ENCODE measurements at regions of chr12 and their contacts with region 1.

Region 1: GRCh38 chr12:724194-724855 is 28.1 kb upstream of the WNK1 start:
- DNase-seq: no peak
- ATAC-seq: peak; percentile 66
- H3K4me3 ChIP-seq: no peak overlapping the region
- H3K27ac ChIP-seq: peak overlapping the region; percentile 46; the same call in 1 of the 2 replicates
- H3K4me1 ChIP-seq: peaks cover 36% of the 10 kb centered on the region
- H3K27me3 ChIP-seq: no peaks in the 10 kb centered on the region
- CTCF ChIP-seq: no peak
- EP300 ChIP-seq: no peak
- POLR2A ChIP-seq: no peak
- RAD21 ChIP-seq: no peak

Region 2: GRCh38 chr12:614411-614970 is 109.8 kb before region 1 on chr12:
- CTCF ChIA-PET with region 1: interaction called, 13 read pairs
- POLR2A ChIA-PET with region 1: interaction called, 5 read pairs
- RAD21 ChIA-PET with region 1: no interaction called
- SMC1A ChIA-PET with region 1: interaction called, 4 read pairs
- in situ Hi-C with region 1: no loop called
- intact Hi-C with region 1: no loop called
- DNase-seq: no peak
- ATAC-seq: peak; percentile 78
- H3K4me3 ChIP-seq: no peak overlapping the region
- H3K27ac ChIP-seq: no peak overlapping the region
- H3K4me1 ChIP-seq: peaks cover 10% of the 10 kb centered on the region
- H3K27me3 ChIP-seq: no peaks in the 10 kb centered on the region
- CTCF ChIP-seq: peak; percentile 61 to 86 (median 63)
- EP300 ChIP-seq: no peak
- POLR2A ChIP-seq: no peak
- RAD21 ChIP-seq: peak; percentile 75

Region 3: DNA sequence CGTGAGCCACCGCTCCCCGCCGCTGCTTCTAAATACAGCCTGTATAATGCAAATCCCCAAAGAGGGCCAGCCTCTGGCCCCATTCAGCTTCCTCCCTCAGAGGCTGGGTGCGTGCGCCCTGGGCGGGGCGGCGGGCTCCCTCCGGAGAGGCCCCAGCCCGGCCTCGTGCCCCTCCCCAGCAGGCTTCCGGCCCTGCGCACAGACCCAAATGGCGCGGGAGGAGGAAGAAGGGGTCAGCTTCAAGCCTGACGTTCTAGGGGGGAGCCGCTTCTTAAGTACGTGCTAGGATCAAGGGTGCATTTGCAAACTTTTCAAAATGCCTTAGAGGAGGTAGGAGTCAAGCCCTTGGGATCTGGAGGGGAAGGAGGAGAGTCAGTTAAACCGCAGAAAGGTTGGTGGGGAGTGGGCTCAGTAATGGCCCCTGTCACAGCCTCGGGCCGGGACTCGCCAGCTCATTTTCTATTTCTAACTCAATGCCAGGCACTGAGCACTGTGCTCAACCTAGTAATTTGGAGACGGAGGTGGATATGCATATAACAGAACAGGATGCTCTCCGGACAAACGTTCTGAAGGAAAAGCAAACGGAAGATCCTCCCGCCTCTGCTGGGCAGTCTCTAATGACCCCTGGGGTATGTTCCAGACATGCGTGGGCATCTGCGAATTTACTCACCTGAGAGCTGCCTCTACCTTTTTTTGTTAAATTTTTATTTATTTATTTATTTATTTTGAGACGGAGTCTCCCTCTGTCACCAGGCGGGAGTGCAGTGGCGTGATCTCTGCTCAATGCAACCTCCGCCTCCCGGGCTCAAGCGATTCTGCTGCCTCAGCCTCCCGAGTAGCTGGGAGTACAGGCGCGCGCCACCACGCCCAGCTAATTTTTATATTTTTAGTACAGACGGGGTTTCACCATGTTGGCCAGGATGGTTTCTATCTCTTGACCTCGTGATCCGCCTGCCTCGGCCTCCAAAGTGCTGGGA is 93.4 kb before region 1 on chr12:
- CTCF ChIA-PET with region 1: no interaction called
- POLR2A ChIA-PET with region 1: interaction called, 10 read pairs
- RAD21 ChIA-PET with region 1: no interaction called
- SMC1A ChIA-PET with region 1: interaction called, 5 read pairs
- in situ Hi-C with region 1: no loop called
- intact Hi-C with region 1: no loop called
- DNase-seq: no peak
- ATAC-seq: peak; percentile 98
- H3K4me3 ChIP-seq: peak overlapping the region; percentile 60
- H3K27ac ChIP-seq: peak overlapping the region; percentile 92
- H3K4me1 ChIP-seq: peaks cover 16% of the 10 kb centered on the region
- H3K27me3 ChIP-seq: no peaks in the 10 kb centered on the region
- CTCF ChIP-seq: no peak
- EP300 ChIP-seq: no peak
- POLR2A ChIP-seq: peak; percentile 86
- RAD21 ChIP-seq: no peak

Region 4: GRCh38 chr12:668090-668481 is 56.2 kb before region 1 on chr12:
- CTCF ChIA-PET with region 1: interaction called, 6 read pairs
- POLR2A ChIA-PET with region 1: interaction called, 20 read pairs
- RAD21 ChIA-PET with region 1: interaction called, 22 read pairs
- SMC1A ChIA-PET with region 1: interaction called, 28 read pairs
- in situ Hi-C with region 1: no loop called
- intact Hi-C with region 1: no loop called
- DNase-seq: no peak
- ATAC-seq: peak; percentile 27
- H3K4me3 ChIP-seq: no peak overlapping the region
- H3K27ac ChIP-seq: peak overlapping the region; percentile 87
- H3K4me1 ChIP-seq: peaks cover 76% of the 10 kb centered on the region
- H3K27me3 ChIP-seq: no peaks in the 10 kb centered on the region
- CTCF ChIP-seq: no peak
- EP300 ChIP-seq: no peak
- POLR2A ChIP-seq: no peak
- RAD21 ChIP-seq: no peak

Region 5: DNA sequence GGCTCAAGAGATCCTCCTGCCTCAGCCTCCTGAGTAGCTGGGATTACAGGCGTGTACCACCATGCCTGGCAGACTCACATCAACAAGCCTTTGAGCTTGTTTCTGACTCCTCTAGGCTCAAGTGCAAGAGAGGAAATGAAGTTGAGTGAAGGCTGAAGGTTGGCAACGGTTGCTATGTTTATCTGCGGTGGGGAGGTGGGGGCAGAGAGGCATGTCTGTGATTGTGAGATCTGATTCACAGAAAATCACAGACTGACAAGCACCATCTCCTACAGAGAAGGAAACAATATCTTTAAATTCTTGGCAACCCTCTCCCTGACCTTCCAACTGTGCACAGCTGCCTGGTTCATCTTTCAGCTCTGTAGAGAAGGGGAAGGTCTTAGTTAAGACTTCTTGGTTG is 38.9 kb before region 1 on chr12:
- CTCF ChIA-PET with region 1: interaction called, 3 read pairs
- POLR2A ChIA-PET with region 1: interaction called, 14 read pairs
- RAD21 ChIA-PET with region 1: interaction called, 17 read pairs
- SMC1A ChIA-PET with region 1: interaction called, 39 read pairs
- in situ Hi-C with region 1: no loop called
- intact Hi-C with region 1: no loop called
- DNase-seq: peak; percentile 88
- ATAC-seq: peak; percentile 84
- H3K4me3 ChIP-seq: peak overlapping the region; percentile 37; the same call in 1 of the 2 replicates
- H3K27ac ChIP-seq: peak overlapping the region; percentile 73
- H3K4me1 ChIP-seq: peaks cover 39% of the 10 kb centered on the region
- H3K27me3 ChIP-seq: no peaks in the 10 kb centered on the region
- CTCF ChIP-seq: no peak
- EP300 ChIP-seq: peak; percentile 44 to 64; a peak in 2 of 4 replicates
- POLR2A ChIP-seq: 0 out of 2 replicates have a peak, but pooled peaks have one; percentile 40
- RAD21 ChIP-seq: no peak

Region 6: GRCh38 chr12:737122-737739 is 12.9 kb after region 1 on chr12:
- CTCF ChIA-PET with region 1: interaction called, 13 read pairs
- POLR2A ChIA-PET with region 1: interaction called, 21 read pairs
- RAD21 ChIA-PET with region 1: interaction called, 10 read pairs
- SMC1A ChIA-PET with region 1: interaction called, 133 read pairs
- in situ Hi-C with region 1: no loop called
- intact Hi-C with region 1: loop called (anchors 2 kb)
- DNase-seq: no peak
- ATAC-seq: no peak
- H3K4me3 ChIP-seq: no peak overlapping the region
- H3K27ac ChIP-seq: no peak overlapping the region
- H3K4me1 ChIP-seq: no peaks in the 10 kb centered on the region
- H3K27me3 ChIP-seq: no peaks in the 10 kb centered on the region
- CTCF ChIP-seq: no peak
- EP300 ChIP-seq: no peak
- POLR2A ChIP-seq: no peak
- RAD21 ChIP-seq: no peak